Naive thymus-derived CD4-positive, alpha-beta T cell (primary cell): ENCODE measurements at regions of chr9 and their contacts with region 1.

Region 1: GRCh38 chr9:3490957-3491356 is 34.8 kb downstream of the RFX3 start:
- DNase-seq: no peak
- ATAC-seq: no peak
- H3K4me3 ChIP-seq: no peak overlapping the region
- H3K4me3 Mint-ChIP-seq: no peak overlapping the region
- H3K27ac ChIP-seq: no peak overlapping the region
- H3K27ac Mint-ChIP-seq: no peak overlapping the region
- H3K4me1 ChIP-seq: no peaks in the 10 kb centered on the region
- H3K4me1 Mint-ChIP-seq: peaks cover 7 to 32% (median 24%) of the 10 kb centered on the region in 7 donors
- H3K27me3 ChIP-seq: no peaks in the 10 kb centered on the region
- H3K27me3 Mint-ChIP-seq: no peaks in the 10 kb centered on the region

Region 2: DNA sequence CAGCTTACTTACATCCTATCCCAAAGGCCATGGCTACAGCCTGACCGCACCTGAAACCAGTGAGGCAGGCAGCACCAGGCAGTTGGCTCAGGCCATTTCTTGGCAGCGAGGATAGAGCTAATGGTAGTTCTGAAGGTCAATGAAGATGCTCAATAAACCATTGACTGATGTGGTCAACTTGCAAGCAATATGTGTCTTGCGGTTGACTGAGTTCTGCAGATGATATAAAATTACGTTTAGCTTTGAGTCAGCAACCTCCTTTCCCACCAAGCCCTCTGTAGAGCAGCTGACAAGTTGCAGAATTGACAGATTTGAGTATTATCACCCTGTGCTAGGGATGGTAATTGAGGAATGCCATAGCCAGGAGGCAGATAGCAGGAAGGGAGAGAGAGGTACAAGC is 458.1 kb before region 1 on chr9:
- CTCF ChIA-PET with region 1: no interaction called
- POLR2A ChIA-PET with region 1: no interaction called
- intact Hi-C with region 1: no loop called
- DNase-seq: no peak
- ATAC-seq: no peak
- H3K4me3 ChIP-seq: no peak overlapping the region
- H3K4me3 Mint-ChIP-seq: no peak overlapping the region
- H3K27ac ChIP-seq: no peak overlapping the region
- H3K27ac Mint-ChIP-seq: no peak overlapping the region
- H3K4me1 ChIP-seq: no peaks in the 10 kb centered on the region
- H3K4me1 Mint-ChIP-seq: peaks cover 0 to 1% (median 0%) of the 10 kb centered on the region in 7 donors
- H3K27me3 ChIP-seq: no peaks in the 10 kb centered on the region
- H3K27me3 Mint-ChIP-seq: peaks cover 0 to 12% (median 6%) of the 10 kb centered on the region in 5 donors

Region 3: DNA sequence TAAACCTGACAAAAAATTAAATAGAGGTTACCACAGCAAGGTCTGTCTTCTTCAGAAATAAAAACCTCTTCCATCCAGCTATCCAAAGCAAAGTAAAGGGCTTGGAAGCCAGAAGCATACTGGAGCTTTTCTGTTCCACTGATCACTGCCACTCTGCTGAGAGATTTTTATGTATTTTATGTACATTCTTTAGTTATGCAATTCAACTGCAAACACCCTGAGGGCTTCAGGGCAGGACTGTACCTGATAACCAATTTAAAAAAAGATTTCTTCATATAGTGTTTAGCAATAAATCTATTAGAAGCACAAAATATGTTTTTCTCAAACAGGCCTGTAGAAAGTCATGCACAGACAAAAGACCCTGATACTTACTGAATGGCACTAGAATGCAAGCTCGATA is 320.1 kb before region 1 on chr9:
- CTCF ChIA-PET with region 1: no interaction called
- POLR2A ChIA-PET with region 1: no interaction called
- intact Hi-C with region 1: no loop called
- DNase-seq: no peak
- ATAC-seq: no peak
- H3K4me3 ChIP-seq: no peak overlapping the region
- H3K4me3 Mint-ChIP-seq: no peak overlapping the region
- H3K27ac ChIP-seq: no peak overlapping the region
- H3K27ac Mint-ChIP-seq: no peak overlapping the region
- H3K4me1 ChIP-seq: no peaks in the 10 kb centered on the region
- H3K4me1 Mint-ChIP-seq: no peaks in the 10 kb centered on the region
- H3K27me3 ChIP-seq: no peaks in the 10 kb centered on the region
- H3K27me3 Mint-ChIP-seq: peaks cover 30 to 60% (median 40%) of the 10 kb centered on the region in 5 donors

Region 4: DNA sequence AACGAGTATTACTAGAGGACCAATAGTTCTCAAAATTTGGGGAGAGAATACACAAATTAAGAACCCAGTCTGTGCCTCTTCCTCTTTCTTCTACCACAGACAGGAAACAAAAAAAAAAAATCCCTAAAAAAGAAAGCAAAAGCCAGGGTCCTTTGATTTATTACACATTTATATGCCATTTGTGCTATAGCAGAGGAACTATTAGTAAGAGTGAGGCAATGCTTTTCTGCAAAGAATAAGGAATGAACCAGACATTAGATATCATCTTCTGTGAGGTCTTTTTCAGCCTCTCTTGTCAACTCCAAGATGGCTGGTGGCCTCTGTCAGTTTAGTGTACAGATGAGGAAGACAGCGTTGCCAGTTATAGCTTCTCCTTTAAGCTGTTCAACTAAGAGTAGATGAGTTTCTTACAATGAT is 92.7 kb before region 1 on chr9:
- CTCF ChIA-PET with region 1: no interaction called
- POLR2A ChIA-PET with region 1: no interaction called
- intact Hi-C with region 1: no loop called
- DNase-seq: peak in 7 of 9 donors; percentile 10 to 57 (median 48)
- ATAC-seq: peak; percentile 76
- H3K4me3 ChIP-seq: no peak overlapping the region
- H3K4me3 Mint-ChIP-seq: peak overlapping the region; percentile 35 to 89 (median 76)
- H3K27ac ChIP-seq: peak overlapping the region; percentile 52
- H3K27ac Mint-ChIP-seq: peak overlapping the region; percentile 81 to 95 (median 91)
- H3K4me1 ChIP-seq: peaks cover 3 to 10% of the 10 kb centered on the region in 2 donors
- H3K4me1 Mint-ChIP-seq: peaks cover 9 to 58% (median 31%) of the 10 kb centered on the region in 7 donors
- H3K27me3 ChIP-seq: no peaks in the 10 kb centered on the region
- H3K27me3 Mint-ChIP-seq: no peaks in the 10 kb centered on the region

Region 5: DNA sequence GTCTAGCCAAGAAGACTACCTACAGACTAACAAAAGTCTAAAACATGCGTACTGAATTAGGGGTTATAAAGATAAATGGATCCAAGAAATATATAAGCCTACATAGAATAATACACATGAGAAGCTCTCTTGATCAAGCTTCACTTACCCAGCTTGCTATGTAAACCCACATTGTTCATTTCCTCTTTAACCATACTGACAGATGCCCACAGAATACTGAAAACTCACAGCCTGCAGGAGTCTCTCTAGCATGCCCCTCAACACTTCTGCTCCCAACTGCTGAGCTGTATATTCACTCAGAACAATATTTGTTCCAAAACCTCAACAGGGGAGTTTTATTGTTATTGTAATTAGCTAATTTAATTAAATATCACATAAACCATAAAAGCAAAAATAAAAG is 17.6 kb before region 1 on chr9:
- CTCF ChIA-PET with region 1: no interaction called
- POLR2A ChIA-PET with region 1: no interaction called
- intact Hi-C with region 1: loop called in 1 of 2 experiments (anchors 2 kb)
- DNase-seq: no peak
- ATAC-seq: peak; percentile 57
- H3K4me3 ChIP-seq: no peak overlapping the region
- H3K4me3 Mint-ChIP-seq: no peak overlapping the region
- H3K27ac ChIP-seq: no peak overlapping the region
- H3K27ac Mint-ChIP-seq: peak overlapping the region in 1 of 9 donors; percentile 0
- H3K4me1 ChIP-seq: peaks cover 6 to 15% of the 10 kb centered on the region in 2 donors
- H3K4me1 Mint-ChIP-seq: peaks cover 24 to 60% (median 43%) of the 10 kb centered on the region in 7 donors
- H3K27me3 ChIP-seq: no peaks in the 10 kb centered on the region
- H3K27me3 Mint-ChIP-seq: no peaks in the 10 kb centered on the region

Region 6: GRCh38 chr9:3508521-3509291 is 17.7 kb after region 1 on chr9:
- CTCF ChIA-PET with region 1: no interaction called
- POLR2A ChIA-PET with region 1: no interaction called
- intact Hi-C with region 1: loop called in 1 of 2 experiments (anchors 2 kb)
- DNase-seq: no peak
- ATAC-seq: no peak
- H3K4me3 ChIP-seq: no peak overlapping the region
- H3K4me3 Mint-ChIP-seq: peak overlapping the region in 8 of 10 donors; percentile 6 to 66 (median 38)
- H3K27ac ChIP-seq: no peak overlapping the region
- H3K27ac Mint-ChIP-seq: peak overlapping the region in 5 of 9 donors; percentile 24 to 83 (median 76)
- H3K4me1 ChIP-seq: peaks cover 0 to 12% of the 10 kb centered on the region in 2 donors
- H3K4me1 Mint-ChIP-seq: peaks cover 23 to 62% (median 41%) of the 10 kb centered on the region in 7 donors
- H3K27me3 ChIP-seq: no peaks in the 10 kb centered on the region
- H3K27me3 Mint-ChIP-seq: no peaks in the 10 kb centered on the region